Activated naive CD4-positive, alpha-beta T cell treated with anti-CD3 and anti-CD28 coated beads, Interleukin-2, amount 10 ng/mL, durations not matched to agents 7 days and 5 days (primary cell): ENCODE measurements at regions of chr3 and their contacts with region 1.

Region 1: GRCh38 chr3:13895155-13896105 is 15.6 kb upstream of the WNT7A start:
- DNase-seq: peak; percentile 98
- H3K4me3 Mint-ChIP-seq: peak overlapping the region; percentile 84
- H3K27ac Mint-ChIP-seq: peak overlapping the region; percentile 88
- H3K4me1 Mint-ChIP-seq: peaks cover 36% of the 10 kb centered on the region
- H3K27me3 Mint-ChIP-seq: peaks cover 33% of the 10 kb centered on the region

Region 2: DNA sequence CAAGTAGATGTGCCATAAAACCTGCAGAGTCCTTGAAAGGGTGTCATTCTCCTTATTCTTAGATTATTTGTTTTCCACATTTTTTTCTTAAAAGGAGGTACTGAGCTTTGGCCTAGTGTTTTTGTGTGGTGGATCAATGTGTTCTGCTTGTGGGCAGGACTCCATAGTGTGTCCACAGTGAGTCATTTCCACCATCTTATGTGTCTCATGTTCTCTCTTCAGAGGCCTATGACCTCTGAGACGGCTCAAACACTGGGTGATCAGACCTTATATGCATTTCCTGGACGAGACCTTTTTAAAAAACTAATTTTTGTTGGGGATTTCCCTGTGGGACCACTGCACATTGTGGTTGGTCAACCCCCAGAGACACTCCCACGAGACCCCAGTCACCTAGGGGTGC is 135.8 kb after region 1 on chr3:
- CTCF ChIA-PET with region 1: no interaction called
- DNase-seq: no peak
- H3K4me3 Mint-ChIP-seq: no peak overlapping the region
- H3K27ac Mint-ChIP-seq: no peak overlapping the region
- H3K4me1 Mint-ChIP-seq: no peaks in the 10 kb centered on the region
- H3K27me3 Mint-ChIP-seq: peaks cover 10% of the 10 kb centered on the region

Region 3: GRCh38 chr3:14113965-14114635 is 218.7 kb after region 1 on chr3:
- CTCF ChIA-PET with region 1: interaction called, 25 read pairs
- DNase-seq: no peak
- H3K4me3 Mint-ChIP-seq: no peak overlapping the region
- H3K27ac Mint-ChIP-seq: no peak overlapping the region
- H3K4me1 Mint-ChIP-seq: no peaks in the 10 kb centered on the region
- H3K27me3 Mint-ChIP-seq: no peaks in the 10 kb centered on the region